Endothelial cell of umbilical vein (primary cell): ENCODE measurements at regions of chr13 and their contacts with region 1.

Region 1: DNA sequence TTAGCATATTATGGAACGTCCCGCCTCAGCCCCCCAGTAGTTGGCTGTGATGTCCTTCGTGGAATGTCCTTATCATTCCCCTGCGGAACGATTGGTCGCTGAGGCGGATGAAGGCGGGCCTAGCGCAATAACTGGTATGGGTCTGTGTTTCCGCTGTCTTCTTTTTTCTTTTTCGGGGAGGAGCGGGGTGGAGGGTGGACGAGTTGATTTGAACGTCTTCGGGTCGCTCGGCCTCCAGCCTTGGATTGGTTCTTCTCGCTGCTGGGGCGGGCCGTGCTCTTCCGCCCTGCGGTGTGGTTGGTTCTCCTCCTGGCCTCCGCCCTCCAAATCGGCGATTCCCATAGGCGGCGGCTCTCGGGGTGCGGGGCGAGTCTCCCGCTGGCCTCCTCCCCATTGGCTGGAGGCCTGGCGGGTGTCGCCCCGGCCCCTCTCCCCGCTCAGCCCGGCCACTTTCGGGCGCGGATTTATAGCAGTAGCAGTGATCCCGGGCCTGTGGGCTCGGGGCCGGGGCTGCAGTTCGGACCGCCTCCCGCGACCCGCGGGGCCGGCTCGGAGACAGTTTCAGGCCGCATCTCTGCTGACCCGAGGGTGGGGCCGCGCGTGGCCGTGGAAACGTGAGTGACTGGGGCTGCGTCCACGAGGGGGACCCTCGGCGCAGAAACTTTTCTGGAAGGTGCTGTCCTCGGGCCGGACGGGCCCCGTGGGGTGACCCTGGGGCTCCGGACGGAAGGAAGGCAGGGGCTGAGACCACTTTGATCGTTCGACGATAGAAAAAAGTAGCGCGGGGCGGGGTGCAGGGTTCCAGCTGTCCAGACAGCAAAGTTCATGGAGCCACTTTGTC is 2.1 kb downstream of the ING1 start:
- DNase-seq: peak; percentile 100
- H3K4me3 ChIP-seq: peak overlapping the region; percentile 85 to 89 (median 87)
- H3K27ac ChIP-seq: peak overlapping the region; percentile 45
- H3K4me1 ChIP-seq: peaks cover 18% of the 10 kb centered on the region
- H3K27me3 ChIP-seq: no peaks in the 10 kb centered on the region
- CTCF ChIP-seq: peak in 1 of 2 donors; percentile 12
- POLR2A ChIP-seq: no peak

Region 2: DNA sequence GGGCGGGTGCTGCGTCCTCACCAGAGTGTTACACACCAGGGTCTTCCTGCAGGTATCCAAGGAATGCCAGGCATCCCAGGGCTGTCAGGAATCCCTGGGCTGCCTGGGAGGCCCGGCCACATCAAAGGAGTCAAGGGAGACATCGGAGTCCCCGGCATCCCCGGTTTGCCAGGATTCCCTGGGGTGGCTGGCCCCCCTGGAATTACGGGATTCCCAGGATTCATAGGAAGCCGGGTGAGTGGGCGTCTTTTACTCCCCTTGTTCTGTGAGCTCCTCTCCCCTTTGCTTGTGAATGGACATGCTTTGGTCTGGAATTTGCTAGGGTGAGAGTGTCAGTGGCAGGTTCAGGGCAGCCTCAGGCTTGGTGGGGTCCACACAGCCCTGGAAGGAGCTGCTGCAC is 230.0 kb before region 1 on chr13:
- CTCF ChIA-PET with region 1: no interaction called
- POLR2A ChIA-PET with region 1: no interaction called
- dilution Hi-C with region 1: no loop called
- intact Hi-C with region 1: no loop called
- DNase-seq: no peak
- H3K4me3 ChIP-seq: no peak overlapping the region
- H3K27ac ChIP-seq: no peak overlapping the region
- H3K4me1 ChIP-seq: no peaks in the 10 kb centered on the region
- H3K27me3 ChIP-seq: no peaks in the 10 kb centered on the region
- CTCF ChIP-seq: no peak
- POLR2A ChIP-seq: no peak

Region 3: GRCh38 chr13:110615322-110616102 is 100.1 kb before region 1 on chr13 and contains the start of gene NAXD:
- CTCF ChIA-PET with region 1: interaction called, 4 read pairs
- POLR2A ChIA-PET with region 1: interaction called, 13 read pairs
- dilution Hi-C with region 1: no loop called
- intact Hi-C with region 1: loop called (anchors 1 kb)
- DNase-seq: peak; percentile 94
- H3K4me3 ChIP-seq: peak within 1 kb of the TSS; percentile 12 to 72 (median 58)
- H3K27ac ChIP-seq: peak within 1 kb of the TSS; percentile 66
- H3K4me1 ChIP-seq: peaks cover 20% of the 10 kb centered on the region
- H3K27me3 ChIP-seq: no peaks in the 10 kb centered on the region
- CTCF ChIP-seq: no peak
- POLR2A ChIP-seq: peak; percentile 79
- total RNA-seq, gene NAXD: 19.9 and 22.4 TPM in 2 replicates

Region 4: DNA sequence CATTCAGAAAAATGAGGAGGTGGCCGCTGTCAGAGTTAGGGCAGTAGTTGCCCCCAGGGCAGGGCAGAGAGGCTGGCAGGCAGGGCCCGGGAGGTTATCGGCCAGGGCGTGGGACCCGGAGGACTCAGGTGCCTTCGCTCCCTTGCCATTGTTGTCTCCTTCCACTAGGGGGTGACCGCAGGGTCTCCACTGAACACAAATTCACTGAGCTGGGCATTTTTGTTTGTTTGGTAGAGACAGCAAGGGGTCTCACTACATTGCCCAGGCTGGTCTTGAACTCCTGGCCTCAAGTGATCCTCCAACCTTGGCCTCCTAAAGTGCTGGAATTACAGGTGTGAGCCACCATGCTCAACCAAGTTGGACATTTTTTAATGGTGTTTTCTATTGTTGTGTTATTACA is 34.8 kb before region 1 on chr13:
- CTCF ChIA-PET with region 1: interaction called, 5 read pairs
- POLR2A ChIA-PET with region 1: interaction called, 8 read pairs
- dilution Hi-C with region 1: no loop called
- intact Hi-C with region 1: loop called (anchors 2 kb)
- DNase-seq: peak; percentile 20
- H3K4me3 ChIP-seq: no peak overlapping the region
- H3K27ac ChIP-seq: no peak overlapping the region
- H3K4me1 ChIP-seq: no peaks in the 10 kb centered on the region
- H3K27me3 ChIP-seq: no peaks in the 10 kb centered on the region
- CTCF ChIP-seq: peak; percentile 29 to 60
- POLR2A ChIP-seq: no peak

Region 5: GRCh38 chr13:110819203-110820014 is 103.8 kb after region 1 on chr13:
- CTCF ChIA-PET with region 1: interaction called, 9 read pairs
- POLR2A ChIA-PET with region 1: interaction called, 6 read pairs
- dilution Hi-C with region 1: no loop called
- intact Hi-C with region 1: loop called (anchors 1 kb)
- DNase-seq: peak; percentile 74
- H3K4me3 ChIP-seq: no peak overlapping the region
- H3K27ac ChIP-seq: no peak overlapping the region
- H3K4me1 ChIP-seq: no peaks in the 10 kb centered on the region
- H3K27me3 ChIP-seq: peaks cover 0 to 3% of the 10 kb centered on the region in 2 experiments
- CTCF ChIP-seq: peak; percentile 92 to 97
- POLR2A ChIP-seq: no peak

Region 6: DNA sequence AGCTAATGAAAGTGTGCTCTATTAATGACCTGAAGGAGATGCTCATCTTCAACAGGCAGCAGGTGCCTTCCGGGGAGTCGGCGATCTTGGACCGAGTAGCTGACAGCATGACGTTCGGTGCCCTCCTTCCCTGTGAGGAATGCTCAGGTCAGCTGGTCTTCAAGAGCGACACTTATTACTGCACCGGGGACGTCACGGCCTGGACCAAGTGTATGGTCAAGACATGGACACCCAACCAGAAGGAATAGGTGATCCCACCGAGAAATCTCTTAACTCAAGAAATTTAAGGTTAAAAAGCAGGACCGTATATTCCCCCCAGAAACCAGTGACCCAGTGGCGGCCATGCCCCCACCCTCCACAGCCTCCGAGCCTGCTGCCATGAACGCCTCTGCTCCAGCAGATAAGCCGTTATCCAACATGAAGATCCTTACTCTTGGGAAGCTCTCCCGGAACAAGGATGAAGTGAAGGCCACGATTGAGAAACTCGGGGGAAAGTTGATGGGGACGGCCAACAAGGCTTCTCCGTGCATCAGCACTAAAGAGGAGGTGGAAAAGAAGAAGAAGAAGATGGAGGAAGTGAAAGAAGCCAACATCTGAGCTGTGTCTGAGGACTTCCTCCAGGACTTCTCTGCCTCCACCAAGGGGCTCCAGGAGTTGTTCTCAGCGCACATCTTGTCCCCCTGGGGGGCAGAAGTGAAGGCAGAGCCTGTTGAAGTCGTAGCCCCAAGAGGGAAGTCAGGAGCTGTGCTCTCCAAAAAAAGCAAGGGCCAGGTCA is 222.1 kb after region 1 on chr13:
- CTCF ChIA-PET with region 1: no interaction called
- POLR2A ChIA-PET with region 1: no interaction called
- dilution Hi-C with region 1: no loop called
- intact Hi-C with region 1: no loop called
- DNase-seq: no peak
- H3K4me3 ChIP-seq: no peak overlapping the region
- H3K27ac ChIP-seq: no peak overlapping the region
- H3K4me1 ChIP-seq: no peaks in the 10 kb centered on the region
- H3K27me3 ChIP-seq: no peaks in the 10 kb centered on the region
- CTCF ChIP-seq: no peak
- POLR2A ChIP-seq: no peak

Region 7: DNA sequence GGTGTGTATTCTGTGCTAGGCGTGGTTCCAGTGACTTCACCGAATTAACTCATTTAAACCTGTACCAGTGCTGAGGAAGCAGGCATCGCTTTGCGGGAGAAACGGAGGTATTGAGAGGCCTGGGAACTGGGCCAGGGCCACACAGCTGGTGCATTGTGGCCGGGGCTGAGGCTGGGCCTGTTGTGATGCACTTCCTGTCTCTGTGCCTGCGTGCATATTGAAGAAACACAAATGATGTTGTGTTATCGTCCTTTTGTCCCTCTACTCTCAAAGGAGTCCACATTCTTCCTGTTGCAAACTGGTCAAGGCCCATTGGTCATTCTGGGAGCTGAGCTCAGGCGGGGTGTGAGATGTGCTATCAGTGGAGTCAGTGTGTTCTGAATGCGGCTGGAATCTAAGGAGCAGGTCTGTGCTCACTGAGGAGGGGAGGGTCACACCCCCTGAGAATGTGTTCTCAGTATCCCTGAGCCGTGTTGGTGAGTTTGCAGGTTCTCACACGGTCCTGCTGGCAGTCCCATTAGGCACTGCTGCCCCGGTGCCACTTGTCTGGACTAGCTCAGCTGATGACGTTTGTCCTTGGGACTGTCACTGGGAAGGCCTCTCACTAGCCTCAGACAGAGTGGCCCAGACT is 461.6 kb after region 1 on chr13:
- CTCF ChIA-PET with region 1: no interaction called
- POLR2A ChIA-PET with region 1: no interaction called
- dilution Hi-C with region 1: no loop called
- intact Hi-C with region 1: loop called (anchors 10 kb)
- DNase-seq: peak; percentile 95
- H3K4me3 ChIP-seq: no peak overlapping the region
- H3K27ac ChIP-seq: peak overlapping the region; percentile 98
- H3K4me1 ChIP-seq: peaks cover 25% of the 10 kb centered on the region
- H3K27me3 ChIP-seq: no peaks in the 10 kb centered on the region
- CTCF ChIP-seq: no peak
- POLR2A ChIP-seq: peak; percentile 35